GM23248 (cell line): ENCODE measurements at regions of chr20 and their contacts with region 1.

Region 1: GRCh38 chr20:25470045-25470444 is 62.6 kb downstream of the GINS1 start:
- DNase-seq: peak; percentile 23
- H3K4me3 ChIP-seq: no peak overlapping the region
- H3K27ac ChIP-seq: no peak overlapping the region
- H3K4me1 ChIP-seq: no peaks in the 10 kb centered on the region
- H3K27me3 ChIP-seq: no peaks in the 10 kb centered on the region

Region 2: GRCh38 chr20:25421102-25421501 is 48.9 kb before region 1 on chr20:
- in situ Hi-C with region 1: loop called (anchors 10 kb)
- DNase-seq: peak; percentile 8
- H3K4me3 ChIP-seq: no peak overlapping the region
- H3K27ac ChIP-seq: no peak overlapping the region
- H3K4me1 ChIP-seq: peaks cover 9% of the 10 kb centered on the region; the same call in 1 of the 2 replicates
- H3K27me3 ChIP-seq: no peaks in the 10 kb centered on the region

Region 3: GRCh38 chr20:25659999-25660398 is 190.0 kb after region 1 on chr20:
- in situ Hi-C with region 1: no loop called
- DNase-seq: no peak
- H3K4me3 ChIP-seq: no peak overlapping the region
- H3K27ac ChIP-seq: no peak overlapping the region
- H3K4me1 ChIP-seq: no peaks in the 10 kb centered on the region
- H3K27me3 ChIP-seq: no peaks in the 10 kb centered on the region